Ascending aorta (tissue), 2 donors: ENCODE measurements at regions of chr15 and their contacts with region 1.

Region 1: GRCh38 chr15:41827880-41828806 is at the start of gene JMJD7:
- DNase-seq: peak; percentile 59 to 95
- H3K4me3 ChIP-seq: peak within 1 kb of the TSS; percentile 68 to 74
- H3K27ac ChIP-seq: peak within 1 kb of the TSS; percentile 72 to 80
- H3K4me1 ChIP-seq: peaks cover 5 to 22% of the 10 kb centered on the region in 2 donors
- H3K27me3 ChIP-seq: no peaks in the 10 kb centered on the region
- CTCF ChIP-seq: peak in 1 of 3 experiments; percentile 2
- total RNA-seq, gene JMJD7: 16.4 TPM

Region 2: GRCh38 chr15:41557673-41558399 is 270.3 kb before region 1 on chr15:
- intact Hi-C with region 1: loop called (anchors 10 kb)
- DNase-seq: peak in 1 of 2 donors; percentile 73
- H3K4me3 ChIP-seq: peak overlapping the region; percentile 95 to 97
- H3K27ac ChIP-seq: peak overlapping the region; percentile 31 to 67
- H3K4me1 ChIP-seq: peaks cover 5 to 9% of the 10 kb centered on the region in 2 donors
- H3K27me3 ChIP-seq: no peaks in the 10 kb centered on the region
- CTCF ChIP-seq: peak; percentile 43 to 71 (median 65)

Region 3: GRCh38 chr15:41621200-41622193 is 206.6 kb before region 1 on chr15:
- intact Hi-C with region 1: loop called (anchors 5 kb)
- DNase-seq: peak; percentile 17 to 86
- H3K4me3 ChIP-seq: peak overlapping the region; percentile 61 to 77
- H3K27ac ChIP-seq: peak overlapping the region; percentile 83
- H3K4me1 ChIP-seq: peaks cover 0 to 8% of the 10 kb centered on the region in 2 donors
- H3K27me3 ChIP-seq: no peaks in the 10 kb centered on the region
- CTCF ChIP-seq: no peak

Region 4: DNA sequence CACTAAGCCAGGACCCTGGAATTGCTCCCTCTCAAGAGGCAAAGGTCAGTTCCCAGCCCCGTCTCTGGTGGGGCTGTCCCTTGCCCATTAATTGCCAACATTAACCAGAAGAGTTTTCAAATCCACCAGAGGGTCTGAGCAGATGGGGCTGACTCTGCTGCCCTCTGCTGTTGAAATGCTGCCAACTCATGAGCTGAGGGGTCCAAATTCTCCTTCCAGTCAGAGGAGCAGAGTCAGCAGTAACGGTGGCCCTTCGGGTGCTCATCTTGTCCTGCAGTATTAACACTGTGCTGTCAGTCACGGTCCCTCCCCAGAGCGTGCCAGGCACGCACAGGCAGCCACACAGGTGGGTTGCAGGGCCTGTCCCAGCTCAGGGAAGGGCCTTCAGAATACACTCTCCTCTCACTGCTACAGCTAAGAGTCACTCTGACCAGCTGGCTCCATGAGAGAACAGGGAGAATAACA is 76.4 kb after region 1 on chr15:
- intact Hi-C with region 1: loop called (anchors 5 kb)
- DNase-seq: no peak
- H3K4me3 ChIP-seq: no peak overlapping the region
- H3K27ac ChIP-seq: peak overlapping the region in 1 of 2 donors; percentile 38
- H3K4me1 ChIP-seq: peaks cover 0 to 3% of the 10 kb centered on the region in 2 donors
- H3K27me3 ChIP-seq: no peaks in the 10 kb centered on the region
- CTCF ChIP-seq: peak; percentile 58 to 76 (median 73)

Region 5: GRCh38 chr15:41917767-41918430 is 89.8 kb after region 1 on chr15:
- intact Hi-C with region 1: no loop called
- DNase-seq: peak in 1 of 2 donors; percentile 39
- H3K4me3 ChIP-seq: no peak overlapping the region
- H3K27ac ChIP-seq: peak overlapping the region; percentile 70 to 79
- H3K4me1 ChIP-seq: peaks cover 33 to 58% of the 10 kb centered on the region in 2 donors
- H3K27me3 ChIP-seq: no peaks in the 10 kb centered on the region
- CTCF ChIP-seq: no peak

Region 6: DNA sequence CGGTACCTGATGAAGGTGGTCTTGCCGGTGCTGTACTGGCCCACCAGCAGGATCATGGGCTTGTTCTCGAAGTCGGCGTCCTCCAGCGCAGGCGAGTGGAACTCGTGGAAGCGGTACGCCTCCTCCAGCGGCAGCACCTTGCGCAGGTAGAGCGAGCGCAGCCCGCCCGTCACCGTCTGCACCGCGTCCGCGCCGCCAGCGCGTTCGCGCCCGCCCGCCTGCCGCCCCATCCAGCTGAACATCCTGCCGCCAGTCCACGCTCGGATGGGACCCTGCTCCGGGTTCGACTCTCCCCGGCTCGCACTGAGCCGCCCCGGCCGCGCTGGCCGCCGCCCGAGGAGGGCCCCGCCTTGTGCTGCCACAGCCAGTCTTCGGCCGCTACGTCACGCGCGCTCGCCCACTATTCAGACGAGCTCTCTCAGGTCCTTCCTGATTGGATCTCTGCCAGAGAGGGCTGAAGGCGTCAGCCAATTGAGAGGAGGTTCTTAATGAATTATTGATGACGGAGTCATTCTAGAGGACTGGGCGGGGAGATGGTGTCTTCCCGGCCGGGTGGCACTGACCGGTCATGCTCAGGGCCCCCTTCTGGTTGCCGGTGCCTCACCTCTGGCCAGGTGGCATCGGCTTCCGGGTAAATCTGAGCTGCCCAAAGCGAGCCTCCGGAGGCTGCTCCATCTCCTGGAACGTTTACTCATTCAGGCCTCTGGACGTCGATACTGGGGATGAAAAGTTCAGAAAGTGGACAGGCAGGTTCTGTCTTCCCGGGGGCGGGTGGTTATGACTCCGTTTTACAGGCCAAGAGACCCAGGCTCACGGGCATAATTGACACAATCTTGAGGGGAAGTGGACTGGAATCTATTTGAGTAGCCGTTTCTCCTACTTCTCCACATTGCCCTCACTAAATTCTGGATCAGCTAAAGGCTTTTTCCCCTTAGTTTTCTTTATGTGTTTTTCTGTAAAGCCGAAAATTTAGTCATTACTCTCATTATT is 144.4 kb after region 1 on chr15 and contains the start of gene EHD4:
- intact Hi-C with region 1: loop called (anchors 2 kb)
- DNase-seq: peak; percentile 98 to 100
- H3K4me3 ChIP-seq: peak within 1 kb of the TSS; percentile 96 to 99
- H3K27ac ChIP-seq: peak within 1 kb of the TSS; percentile 98
- H3K4me1 ChIP-seq: peaks cover 0 to 24% of the 10 kb centered on the region in 2 donors
- H3K27me3 ChIP-seq: no peaks in the 10 kb centered on the region
- CTCF ChIP-seq: peak; percentile 42 to 56 (median 44)
- total RNA-seq, gene EHD4: 70.4 TPM

Region 7: DNA sequence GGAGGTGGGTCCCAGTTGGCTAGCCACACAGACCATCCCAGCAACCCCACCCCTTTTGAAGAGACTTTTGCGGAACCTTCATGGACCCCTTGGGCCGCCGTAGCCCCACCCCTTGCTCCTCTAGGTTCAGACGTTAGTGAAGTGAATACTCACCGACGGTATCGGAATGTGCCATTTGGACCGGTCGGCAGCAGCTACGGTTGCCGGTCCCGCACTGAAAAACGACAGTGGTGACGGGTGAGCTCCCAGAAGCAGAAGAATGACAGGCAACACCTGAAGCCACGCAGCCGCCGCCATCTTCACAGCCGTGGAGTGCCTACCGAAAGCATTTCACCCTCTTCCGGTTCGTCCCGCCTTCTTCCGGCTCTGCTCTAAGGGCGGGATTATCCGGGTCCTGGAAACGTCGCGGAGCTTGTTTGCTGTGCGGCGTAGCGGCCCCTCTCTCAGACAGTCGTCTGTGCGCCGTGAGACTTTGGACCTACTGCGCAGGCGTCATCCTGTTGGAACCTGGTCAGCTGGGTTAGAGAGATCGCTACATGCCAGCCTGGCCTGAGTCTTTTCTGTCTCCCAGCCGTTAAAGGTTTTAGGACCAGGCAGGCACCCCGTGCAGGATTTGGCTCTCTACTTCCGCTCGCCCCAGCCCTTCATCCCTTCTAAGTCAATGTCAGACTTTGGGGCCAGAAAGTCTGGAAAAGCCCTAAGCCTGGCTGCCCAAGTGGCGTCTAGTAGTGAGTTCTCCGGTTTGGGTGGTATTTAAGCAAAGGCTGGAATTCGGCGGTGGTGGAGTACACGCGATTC is 445.2 kb after region 1 on chr15 and contains the starts of genes GANC and TMEM87A:
- intact Hi-C with region 1: loop called (anchors 5 kb)
- DNase-seq: peak; percentile 93 to 99
- H3K4me3 ChIP-seq: peak within 1 kb of the TSS; percentile 74 to 89
- H3K27ac ChIP-seq: peak within 1 kb of the TSS; percentile 99 to 100
- H3K4me1 ChIP-seq: peaks cover 9 to 40% of the 10 kb centered on the region in 2 donors
- H3K27me3 ChIP-seq: no peaks in the 10 kb centered on the region
- CTCF ChIP-seq: no peak
- total RNA-seq, gene GANC: 22.9 TPM
- total RNA-seq, gene TMEM87A: 25.4 TPM